CD4-positive, alpha-beta memory T cell (primary cell): ENCODE measurements at regions of chr12 and their contacts with region 1.

Region 1: DNA sequence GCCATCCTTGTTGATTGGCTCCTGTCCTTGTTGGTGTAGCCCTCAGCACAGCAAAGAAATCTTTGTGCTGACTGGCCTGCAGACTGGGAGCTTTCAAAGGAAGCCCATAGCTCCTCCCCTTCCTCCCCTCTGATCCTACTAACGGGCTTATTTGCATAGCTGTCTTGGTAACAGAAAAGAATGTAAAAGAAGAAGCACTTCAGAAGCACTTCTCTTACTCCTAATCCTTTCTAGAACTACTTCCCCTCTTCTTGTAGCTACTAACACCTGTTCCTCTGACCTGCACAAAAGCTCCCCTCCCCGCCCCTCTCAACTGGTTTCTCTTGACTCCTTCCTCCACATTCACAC is 14.3 kb upstream of the RIC8B start:
- DNase-seq: peak; percentile 38 to 62 (median 47)
- H3K4me3 ChIP-seq: peak overlapping the region in 1 of 2 donors; percentile 34
- H3K4me3 Mint-ChIP-seq: peak overlapping the region; percentile 74 to 88 (median 86)
- H3K27ac ChIP-seq: peak overlapping the region; percentile 64
- H3K27ac Mint-ChIP-seq: peak overlapping the region; percentile 89 to 98 (median 94)
- H3K4me1 ChIP-seq: peaks cover 26% of the 10 kb centered on the region
- H3K4me1 Mint-ChIP-seq: peaks cover 19 to 41% (median 27%) of the 10 kb centered on the region in 4 donors
- H3K27me3 ChIP-seq: no peaks in the 10 kb centered on the region
- H3K27me3 Mint-ChIP-seq: no peaks in the 10 kb centered on the region

Region 2: GRCh38 chr12:106682592-106683234 is 77.4 kb before region 1 on chr12:
- CTCF ChIA-PET with region 1: no interaction called
- POLR2A ChIA-PET with region 1: no interaction called
- intact Hi-C with region 1: no loop called
- DNase-seq: peak in 2 of 5 donors; percentile 4 to 10
- H3K4me3 ChIP-seq: no peak overlapping the region
- H3K4me3 Mint-ChIP-seq: no peak overlapping the region
- H3K27ac ChIP-seq: no peak overlapping the region
- H3K27ac Mint-ChIP-seq: no peak overlapping the region
- H3K4me1 ChIP-seq: no peaks in the 10 kb centered on the region
- H3K4me1 Mint-ChIP-seq: no peaks in the 10 kb centered on the region
- H3K27me3 ChIP-seq: no peaks in the 10 kb centered on the region
- H3K27me3 Mint-ChIP-seq: peaks cover 0 to 1% of the 10 kb centered on the region in 2 donors

Region 3: GRCh38 chr12:106747973-106748436 is 12.2 kb before region 1 on chr12:
- CTCF ChIA-PET with region 1: interaction called, 5 read pairs
- POLR2A ChIA-PET with region 1: interaction called, 20 read pairs
- intact Hi-C with region 1: no loop called
- DNase-seq: peak; percentile 63 to 85 (median 79)
- H3K4me3 ChIP-seq: no peak overlapping the region
- H3K4me3 Mint-ChIP-seq: peak overlapping the region; percentile 23 to 76 (median 56)
- H3K27ac ChIP-seq: peak overlapping the region; percentile 61
- H3K27ac Mint-ChIP-seq: peak overlapping the region; percentile 88 to 99 (median 97)
- H3K4me1 ChIP-seq: peaks cover 46% of the 10 kb centered on the region
- H3K4me1 Mint-ChIP-seq: peaks cover 31 to 54% (median 43%) of the 10 kb centered on the region in 4 donors
- H3K27me3 ChIP-seq: no peaks in the 10 kb centered on the region
- H3K27me3 Mint-ChIP-seq: peaks cover 0 to 1% of the 10 kb centered on the region in 2 donors